RWPE1 (cell line): ENCODE measurements at regions of chr12 and their contacts with region 1.

Region 1: GRCh38 chr12:15220994-15221885 is at the start of gene RERG:
- DNase-seq: peak; percentile 61
- H3K27ac ChIP-seq: peak within 1 kb of the TSS; percentile 35
- CTCF ChIP-seq: peak; percentile 83

Region 2: DNA sequence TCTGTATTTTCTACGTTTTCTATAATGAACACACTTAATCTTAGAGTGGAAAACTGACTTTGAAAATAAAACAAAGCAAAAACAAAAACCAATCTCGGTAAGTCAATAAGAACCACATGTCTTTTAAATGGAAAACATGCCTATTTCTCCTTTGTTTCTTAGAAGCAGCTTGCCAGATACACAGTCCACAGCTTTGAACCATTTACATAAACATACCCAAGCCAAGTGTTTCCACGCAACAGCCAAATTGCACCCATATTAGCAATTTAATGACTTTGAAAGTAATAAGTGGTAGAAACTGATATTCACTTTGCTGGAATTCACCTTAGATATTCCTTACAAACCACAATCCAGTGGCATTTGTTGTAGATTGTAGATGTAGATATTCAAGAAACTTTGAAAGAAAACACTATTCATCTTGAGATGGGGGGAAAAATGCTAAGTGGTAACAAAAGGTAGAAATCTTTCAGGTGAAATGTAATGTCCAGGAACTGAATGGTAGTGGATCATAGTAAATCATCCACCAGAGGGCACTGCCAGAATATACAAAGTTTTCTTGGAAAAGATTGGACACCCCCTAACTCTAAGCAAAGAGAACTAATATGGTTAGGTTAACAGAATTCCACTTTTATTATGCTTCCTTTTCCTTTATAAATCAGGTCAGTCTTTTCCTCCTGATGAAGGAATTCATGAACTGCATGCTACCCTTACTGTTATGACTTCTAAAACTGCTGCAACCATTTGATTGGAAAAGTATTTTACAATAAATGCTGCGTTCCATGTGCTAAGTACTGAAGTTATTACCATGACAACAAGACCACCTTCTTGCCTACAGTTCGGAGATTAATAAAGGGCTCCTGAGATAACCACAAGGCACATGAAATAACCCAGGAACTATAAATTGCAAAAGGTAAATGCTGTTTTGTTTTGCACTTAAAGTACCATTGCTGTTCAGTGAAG is 69.8 kb before region 1 on chr12:
- CTCF ChIA-PET with region 1: interaction called, 18 read pairs
- POLR2A ChIA-PET with region 1: no interaction called
- DNase-seq: peak; percentile 29
- H3K27ac ChIP-seq: no peak overlapping the region
- CTCF ChIP-seq: peak; percentile 37

Region 3: DNA sequence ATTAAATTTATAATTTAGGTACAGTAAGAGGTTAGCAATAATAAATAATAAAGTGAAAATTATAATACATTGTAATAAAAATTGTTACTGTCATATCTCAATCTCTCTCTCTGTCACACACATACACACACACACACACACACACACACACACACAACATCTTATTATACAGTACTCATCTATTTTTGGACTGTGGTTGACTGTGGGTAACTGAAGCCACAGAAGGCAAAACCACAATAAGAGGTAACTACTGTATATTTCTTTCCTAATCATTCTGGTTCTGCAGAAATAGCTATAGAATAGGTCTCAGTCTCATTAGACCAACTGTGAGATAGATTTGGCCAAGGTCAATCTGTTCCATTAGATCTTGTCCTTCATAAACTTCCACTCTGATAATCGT is 68.0 kb after region 1 on chr12:
- CTCF ChIA-PET with region 1: no interaction called
- POLR2A ChIA-PET with region 1: no interaction called
- DNase-seq: no peak
- H3K27ac ChIP-seq: no peak overlapping the region
- CTCF ChIP-seq: no peak